ENCODE measurements at regions of chr17 and their contacts with region 1.

Region 1: GRCh38 chr17:45197555-45198334 is 23.9 kb upstream of the FMNL1 start:
- DNase-seq: peak; percentile 86 to 93
- H3K4me3 ChIP-seq: no peak overlapping the region
- H3K27ac ChIP-seq: peak overlapping the region; percentile 54 to 55
- H3K4me1 ChIP-seq: peaks cover 0 to 13% (median 8%) of the 10 kb centered on the region in 4 donors
- H3K27me3 ChIP-seq: no peaks in the 10 kb centered on the region
- CTCF ChIP-seq: peak; percentile 99

Region 2: DNA sequence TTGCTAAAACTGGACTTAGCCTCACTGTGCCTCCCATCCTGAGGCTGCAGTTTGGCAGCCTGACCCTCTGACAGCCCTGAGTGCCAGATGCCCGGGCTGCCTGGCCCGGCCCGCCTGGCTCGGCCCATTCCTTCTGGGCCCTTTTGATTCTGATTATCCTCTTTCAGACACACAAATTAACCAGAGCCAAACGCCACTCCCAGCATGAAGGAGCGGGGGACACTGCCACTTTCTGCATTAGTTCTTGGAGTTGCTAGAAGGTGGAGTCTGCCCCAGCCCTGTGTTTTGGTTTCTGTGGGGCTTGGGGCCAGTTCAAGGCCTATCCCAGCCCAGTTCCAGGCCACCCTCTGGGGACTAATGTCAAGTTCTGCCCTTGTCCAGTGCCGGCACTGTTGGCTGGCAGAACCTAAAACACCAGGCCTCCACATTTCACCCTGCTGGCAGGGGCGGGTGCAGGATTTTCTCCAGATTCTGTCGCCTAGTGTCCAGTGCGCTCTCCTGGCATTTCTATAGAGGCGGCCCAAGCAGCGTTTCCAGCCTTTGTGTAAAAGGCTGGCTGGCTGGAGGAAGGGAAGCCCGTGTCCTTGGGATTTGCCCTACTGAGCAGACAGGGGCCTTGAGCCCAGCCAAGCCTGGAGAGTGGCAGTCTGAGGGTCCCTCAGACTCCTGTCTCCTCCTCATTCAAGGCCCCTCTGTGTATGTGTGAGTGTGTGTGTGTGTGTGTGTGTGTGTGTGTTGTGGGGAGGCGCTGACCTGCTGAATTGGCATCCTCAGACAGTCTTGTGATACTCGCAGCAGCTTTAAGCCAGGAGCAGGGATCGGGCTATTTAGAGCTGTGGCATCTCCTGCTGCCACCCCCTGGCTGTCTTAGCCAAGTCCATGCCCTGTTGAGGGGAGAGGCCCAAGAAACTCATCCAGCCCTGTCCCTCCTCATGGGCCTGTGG is 86.8 kb before region 1 on chr17:
- intact Hi-C with region 1: no loop called
- DNase-seq: peak; percentile 63 to 91
- H3K4me3 ChIP-seq: no peak overlapping the region
- H3K27ac ChIP-seq: peak overlapping the region; percentile 87 to 91
- H3K4me1 ChIP-seq: peaks cover 4 to 75% (median 43%) of the 10 kb centered on the region in 4 donors
- H3K27me3 ChIP-seq: no peaks in the 10 kb centered on the region
- CTCF ChIP-seq: peak in 1 of 2 experiments; percentile 41

Region 3: GRCh38 chr17:45132572-45133463 is 64.9 kb before region 1 on chr17:
- intact Hi-C with region 1: loop called (anchors 2 kb)
- DNase-seq: peak; percentile 88 to 92
- H3K4me3 ChIP-seq: peak overlapping the region; percentile 70 to 94
- H3K27ac ChIP-seq: peak overlapping the region; percentile 98 to 99
- H3K4me1 ChIP-seq: peaks cover 6 to 64% (median 52%) of the 10 kb centered on the region in 4 donors
- H3K27me3 ChIP-seq: no peaks in the 10 kb centered on the region
- CTCF ChIP-seq: peak; percentile 88 to 93

Measured in tibial artery (tissue), 4 donors.